ENCODE measurements at regions of chr12 and their contacts with region 1.

Region 1: DNA sequence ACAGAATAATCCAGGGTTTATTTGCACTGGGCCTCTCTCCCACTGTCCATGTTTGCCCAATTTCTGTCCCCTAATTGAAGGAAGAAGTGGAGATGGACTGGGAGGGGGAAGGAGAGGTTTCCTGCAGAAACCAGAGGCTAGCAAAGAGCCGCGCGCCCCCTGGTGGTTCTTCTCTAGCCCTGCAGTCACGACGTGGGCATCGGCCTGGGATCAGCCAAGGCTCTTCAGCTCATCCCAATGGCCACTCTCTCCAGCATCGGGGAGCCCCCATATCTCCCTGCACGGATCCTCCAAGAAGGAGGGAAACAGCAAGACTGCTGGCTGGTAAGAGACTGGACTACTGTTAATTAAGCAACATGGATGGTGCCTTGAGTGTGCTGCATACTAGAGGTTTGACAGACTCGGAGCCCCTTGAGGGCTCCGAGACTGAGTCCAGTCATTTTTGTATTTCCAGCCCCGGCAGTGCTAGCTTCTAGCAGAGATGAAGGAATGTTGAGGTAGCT is 18.7 kb downstream of the ZBTB39 start:
- DNase-seq: peak; percentile 74 to 91 (median 81)
- ATAC-seq: peak; percentile 70 to 92 (median 84)
- H3K4me3 ChIP-seq: peak overlapping the region in 1 of 12 donors; percentile 16
- H3K27ac ChIP-seq: peak overlapping the region in 4 of 12 donors; percentile 27 to 51 (median 38)
- H3K4me1 ChIP-seq: peaks cover 4 to 46% (median 28%) of the 10 kb centered on the region in 12 donors
- H3K27me3 ChIP-seq: no peaks in the 10 kb centered on the region
- CTCF ChIP-seq: peak; percentile 85 to 96 (median 90)
- POLR2A ChIP-seq: no peak

Region 2: GRCh38 chr12:56751712-56752598 is 235.6 kb before region 1 on chr12 and contains the start of gene PRIM1:
- intact Hi-C with region 1: loop called in 5 of 10 experiments (anchors 1 to 5 kb)
- DNase-seq: peak; percentile 80 to 92 (median 84)
- ATAC-seq: peak; percentile 87 to 98 (median 97)
- H3K4me3 ChIP-seq: peak within 1 kb of the TSS; percentile 42 to 87 (median 76)
- H3K27ac ChIP-seq: peak within 1 kb of the TSS in 9 of 12 donors; percentile 31 to 79 (median 49)
- H3K4me1 ChIP-seq: peaks cover 0 to 35% (median 8%) of the 10 kb centered on the region in 12 donors
- H3K27me3 ChIP-seq: no peaks in the 10 kb centered on the region
- CTCF ChIP-seq: peak in 2 of 12 donors; percentile 16 to 41
- POLR2A ChIP-seq: peak in 1 of 2 donors; percentile 40
- total RNA-seq, gene PRIM1: 2.4 to 6.1 (median 3.3) TPM

Region 3: DNA sequence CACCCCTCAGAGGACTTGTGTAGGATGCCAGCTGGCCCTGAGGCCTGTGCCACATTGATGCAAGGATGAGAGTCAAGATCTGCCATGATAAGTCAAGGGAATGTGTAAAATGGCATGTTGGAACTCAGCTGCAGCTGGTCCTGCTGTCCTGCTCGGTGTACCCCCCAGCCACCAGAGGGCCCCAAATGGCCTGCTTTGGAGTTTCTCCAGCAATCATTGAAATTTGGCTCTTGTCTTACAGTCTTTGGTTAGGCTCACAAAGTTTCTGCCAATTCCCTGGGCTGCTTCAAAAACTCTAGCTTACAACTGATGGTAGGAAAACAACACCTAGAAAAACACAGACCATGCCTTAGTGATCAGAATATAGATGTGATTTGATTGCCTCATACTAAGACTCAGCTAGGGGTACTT is 147.7 kb before region 1 on chr12:
- intact Hi-C with region 1: loop called in 2 of 10 experiments (anchors 2 to 5 kb)
- DNase-seq: peak; percentile 26 to 68 (median 32)
- ATAC-seq: peak in 3 of 4 donors; percentile 46 to 56 (median 54)
- H3K4me3 ChIP-seq: no peak overlapping the region
- H3K27ac ChIP-seq: no peak overlapping the region
- H3K4me1 ChIP-seq: peaks cover 0 to 30% (median 6%) of the 10 kb centered on the region in 12 donors
- H3K27me3 ChIP-seq: no peaks in the 10 kb centered on the region
- CTCF ChIP-seq: peak; percentile 20 to 56 (median 40)
- POLR2A ChIP-seq: no peak

Measured in heart left ventricle (tissue), 16 donors.